ENCODE measurements at regions of chr1 and their contacts with region 1.

Region 1: DNA sequence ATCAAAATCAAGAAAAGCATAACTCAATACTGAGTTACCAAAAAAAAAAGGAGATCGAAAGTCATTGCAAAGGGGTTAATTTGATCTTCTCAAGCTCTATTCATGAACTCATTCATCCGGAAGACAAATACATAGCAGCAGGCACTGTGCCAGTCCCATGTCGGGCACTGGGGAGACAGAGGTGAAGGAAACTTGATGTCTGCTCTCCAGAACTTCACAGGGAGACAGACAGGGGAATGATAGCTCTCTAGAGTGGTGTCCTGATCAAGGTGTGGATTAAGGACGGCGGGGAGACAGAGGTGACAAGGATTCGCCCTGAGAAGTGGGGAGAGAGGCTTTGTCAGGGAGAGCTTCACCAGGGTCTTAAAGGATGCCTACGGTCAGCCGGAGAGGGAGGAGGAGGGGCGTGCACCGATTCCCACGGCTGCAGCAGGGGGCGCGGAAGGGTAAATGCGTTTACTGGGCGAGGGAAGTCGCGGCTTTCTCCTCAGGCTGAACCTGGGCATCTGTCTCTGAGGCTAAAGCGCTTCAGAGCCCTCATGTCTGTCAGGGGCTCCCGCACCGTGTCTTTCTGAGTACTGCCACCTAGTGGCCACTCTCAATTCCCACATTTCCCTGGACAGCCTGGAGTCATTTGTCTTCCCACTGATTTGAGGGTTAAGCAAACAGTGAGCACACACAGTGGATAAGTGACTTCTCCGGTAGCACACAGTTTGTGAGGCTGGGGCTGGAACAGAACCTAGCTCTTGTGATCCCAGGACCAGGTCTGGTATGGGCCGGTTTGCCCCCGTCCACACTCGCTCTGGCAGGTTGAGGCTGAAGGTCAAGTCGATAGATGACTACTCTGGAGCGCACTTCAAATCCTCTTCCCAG is 152.8 kb downstream of the TENT5C start:
- DNase-seq: peak; percentile 45
- ATAC-seq: peak; percentile 92
- H3K4me3 Mint-ChIP-seq: peak overlapping the region; percentile 73
- H3K27ac Mint-ChIP-seq: no peak overlapping the region
- H3K4me1 Mint-ChIP-seq: peaks cover 12% of the 10 kb centered on the region
- H3K27me3 Mint-ChIP-seq: peaks cover 15% of the 10 kb centered on the region
- CTCF ChIP-seq: peak; percentile 45

Region 2: DNA sequence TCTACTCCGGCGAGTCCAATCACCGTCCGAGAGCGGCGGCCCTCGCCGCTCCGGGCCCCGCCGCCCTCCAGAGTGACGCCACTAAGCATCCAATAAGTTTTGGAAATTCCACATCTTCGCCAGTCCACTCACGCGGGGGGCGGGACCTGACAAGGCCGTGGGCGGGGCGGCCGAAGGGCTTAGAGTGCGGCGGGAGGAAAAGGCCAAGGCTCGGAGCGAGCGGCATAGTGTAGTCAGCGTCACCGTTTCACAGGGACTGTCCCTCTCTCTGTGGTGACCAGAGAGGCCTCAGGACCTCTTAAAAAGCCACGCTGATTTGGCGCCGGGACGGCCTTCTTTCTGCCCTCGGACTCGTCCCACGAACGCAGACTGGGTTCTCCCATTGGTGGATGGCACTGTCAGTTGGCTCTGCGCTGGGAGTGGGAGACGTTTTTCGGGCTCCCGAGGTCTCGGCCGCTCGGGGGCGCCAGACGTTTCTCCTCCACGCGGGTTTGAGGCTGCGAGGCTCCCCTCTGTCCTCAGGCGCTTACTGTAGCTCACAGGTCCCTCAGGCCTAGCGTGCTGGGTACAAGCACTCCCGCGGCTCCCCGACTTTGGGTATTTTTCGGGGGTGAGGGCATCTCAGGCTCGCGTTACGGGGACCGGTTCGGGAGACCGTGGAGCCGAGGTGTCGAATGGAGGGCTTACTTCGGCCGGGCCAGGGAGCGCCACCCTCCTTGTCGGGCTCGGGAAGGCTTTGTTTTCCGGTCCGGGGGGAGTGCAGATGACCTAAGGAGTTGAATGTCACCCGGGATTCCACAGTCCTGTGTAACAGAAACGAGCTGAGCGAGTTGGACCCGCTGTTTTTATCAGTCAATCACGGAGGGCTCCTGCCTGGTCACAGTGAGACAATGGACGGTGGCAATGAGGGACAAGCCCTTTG is 636.6 kb before region 1 on chr1:
- CTCF ChIA-PET with region 1: no interaction called
- POLR2A ChIA-PET with region 1: no interaction called
- intact Hi-C with region 1: loop called (anchors 2 kb)
- DNase-seq: peak; percentile 76
- ATAC-seq: peak; percentile 88
- H3K4me3 Mint-ChIP-seq: peak overlapping the region; percentile 88
- H3K27ac Mint-ChIP-seq: peak overlapping the region; percentile 54
- H3K4me1 Mint-ChIP-seq: peaks cover 13% of the 10 kb centered on the region
- H3K27me3 Mint-ChIP-seq: peaks cover 2% of the 10 kb centered on the region
- CTCF ChIP-seq: no peak

Region 3: GRCh38 chr1:117512743-117513321 is 245.8 kb before region 1 on chr1:
- CTCF ChIA-PET with region 1: interaction called, 211 read pairs
- POLR2A ChIA-PET with region 1: no interaction called
- intact Hi-C with region 1: loop called (anchors 1 kb)
- DNase-seq: no peak
- ATAC-seq: no peak
- H3K4me3 Mint-ChIP-seq: no peak overlapping the region
- H3K27ac Mint-ChIP-seq: no peak overlapping the region
- H3K4me1 Mint-ChIP-seq: peaks cover 4% of the 10 kb centered on the region
- H3K27me3 Mint-ChIP-seq: no peaks in the 10 kb centered on the region
- CTCF ChIP-seq: no peak

Region 4: DNA sequence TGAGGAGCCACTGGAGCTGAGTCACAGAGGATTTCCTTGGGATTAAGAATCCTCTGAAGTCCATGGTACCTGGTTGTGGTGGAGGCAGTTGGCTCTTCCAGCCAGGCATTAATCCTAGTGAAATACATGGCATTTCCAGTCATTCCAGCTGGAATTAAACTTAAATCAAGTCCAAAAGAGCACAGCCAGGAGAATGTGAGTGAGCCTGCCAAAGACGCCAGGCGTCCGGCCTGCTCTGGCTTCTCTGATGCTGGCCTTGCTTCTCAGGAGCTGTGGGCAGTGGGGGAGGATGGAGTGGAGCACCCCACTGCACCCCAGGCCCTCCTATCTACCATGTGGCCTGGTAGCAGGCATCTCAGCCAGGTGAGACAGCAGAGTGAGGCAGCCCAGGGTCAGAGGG is 176.2 kb before region 1 on chr1:
- CTCF ChIA-PET with region 1: interaction called, 13 read pairs
- POLR2A ChIA-PET with region 1: no interaction called
- intact Hi-C with region 1: no loop called
- DNase-seq: no peak
- ATAC-seq: no peak
- H3K4me3 Mint-ChIP-seq: no peak overlapping the region
- H3K27ac Mint-ChIP-seq: no peak overlapping the region
- H3K4me1 Mint-ChIP-seq: no peaks in the 10 kb centered on the region
- H3K27me3 Mint-ChIP-seq: no peaks in the 10 kb centered on the region
- CTCF ChIP-seq: no peak

Region 5: GRCh38 chr1:117775913-117776312 is 17.2 kb after region 1 on chr1:
- CTCF ChIA-PET with region 1: no interaction called
- POLR2A ChIA-PET with region 1: no interaction called
- intact Hi-C with region 1: no loop called
- DNase-seq: no peak
- ATAC-seq: no peak
- H3K4me3 Mint-ChIP-seq: no peak overlapping the region
- H3K27ac Mint-ChIP-seq: no peak overlapping the region
- H3K4me1 Mint-ChIP-seq: no peaks in the 10 kb centered on the region
- H3K27me3 Mint-ChIP-seq: peaks cover 15% of the 10 kb centered on the region
- CTCF ChIP-seq: no peak